PC-9 (cell line): ENCODE measurements at regions of chr17 and their contacts with region 1.

Region 1: DNA sequence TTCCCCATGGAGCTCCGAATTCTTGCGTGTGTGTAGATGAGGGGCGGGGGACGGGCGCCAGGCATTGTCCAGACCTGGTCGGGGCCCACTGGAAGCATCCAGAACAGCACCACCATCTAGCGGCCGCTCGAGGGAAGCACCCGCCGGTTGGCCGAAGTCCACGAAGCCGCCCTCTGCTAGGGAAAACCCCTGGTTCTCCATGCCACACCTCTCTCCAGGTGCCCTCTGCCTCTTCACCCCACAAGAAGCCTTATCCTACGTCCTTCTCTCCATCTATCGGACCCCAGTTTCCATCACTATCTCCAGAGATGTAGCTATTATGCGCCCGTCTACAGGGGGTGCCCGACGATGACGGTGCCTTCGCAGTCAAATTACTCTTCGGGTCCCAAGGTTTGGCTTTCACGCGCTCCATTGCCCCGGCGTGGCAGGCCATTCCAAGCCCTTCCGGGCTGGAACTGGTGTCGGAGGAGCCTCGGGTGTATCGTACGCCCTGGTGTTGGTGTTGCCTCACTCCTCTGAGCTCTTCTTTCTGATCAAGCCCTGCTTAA is 617 bp upstream of the SENP3 start:
- DNase-seq: peak; percentile 62 to 93
- H3K4me3 ChIP-seq: peak overlapping the region; percentile 92
- H3K27ac ChIP-seq: peak overlapping the region; percentile 60
- H3K4me1 ChIP-seq: peaks cover 9% of the 10 kb centered on the region
- H3K27me3 ChIP-seq: no peaks in the 10 kb centered on the region
- CTCF ChIP-seq: peak; percentile 69

Region 2: GRCh38 chr17:7280519-7281429 is 280.3 kb before region 1 on chr17:
- CTCF ChIA-PET with region 1: interaction called, 6 read pairs
- POLR2A ChIA-PET with region 1: no interaction called
- intact Hi-C with region 1: loop called (anchors 1 kb)
- DNase-seq: peak; percentile 74 to 91
- H3K4me3 ChIP-seq: peak overlapping the region; percentile 55
- H3K27ac ChIP-seq: peak overlapping the region; percentile 62
- H3K4me1 ChIP-seq: 0 out of 2 replicates have a peak, but pooled peaks cover 4% of the 10 kb centered on the region
- H3K27me3 ChIP-seq: no peaks in the 10 kb centered on the region
- CTCF ChIP-seq: peak; percentile 96

Region 3: GRCh38 chr17:7394452-7395191 is 166.5 kb before region 1 on chr17 and contains the start of gene PLSCR3:
- CTCF ChIA-PET with region 1: no interaction called
- POLR2A ChIA-PET with region 1: no interaction called
- intact Hi-C with region 1: loop called (anchors 2 kb)
- DNase-seq: peak; percentile 57 to 95
- H3K4me3 ChIP-seq: peak within 1 kb of the TSS; percentile 78
- H3K27ac ChIP-seq: peak within 1 kb of the TSS; percentile 68
- H3K4me1 ChIP-seq: 0 out of 2 replicates have a peak, but pooled peaks cover 5% of the 10 kb centered on the region
- H3K27me3 ChIP-seq: no peaks in the 10 kb centered on the region
- CTCF ChIP-seq: no peak; the same call in 1 of the 2 replicates
- total RNA-seq, gene PLSCR3: 53.0 and 64.5 TPM in 2 replicates

Region 4: DNA sequence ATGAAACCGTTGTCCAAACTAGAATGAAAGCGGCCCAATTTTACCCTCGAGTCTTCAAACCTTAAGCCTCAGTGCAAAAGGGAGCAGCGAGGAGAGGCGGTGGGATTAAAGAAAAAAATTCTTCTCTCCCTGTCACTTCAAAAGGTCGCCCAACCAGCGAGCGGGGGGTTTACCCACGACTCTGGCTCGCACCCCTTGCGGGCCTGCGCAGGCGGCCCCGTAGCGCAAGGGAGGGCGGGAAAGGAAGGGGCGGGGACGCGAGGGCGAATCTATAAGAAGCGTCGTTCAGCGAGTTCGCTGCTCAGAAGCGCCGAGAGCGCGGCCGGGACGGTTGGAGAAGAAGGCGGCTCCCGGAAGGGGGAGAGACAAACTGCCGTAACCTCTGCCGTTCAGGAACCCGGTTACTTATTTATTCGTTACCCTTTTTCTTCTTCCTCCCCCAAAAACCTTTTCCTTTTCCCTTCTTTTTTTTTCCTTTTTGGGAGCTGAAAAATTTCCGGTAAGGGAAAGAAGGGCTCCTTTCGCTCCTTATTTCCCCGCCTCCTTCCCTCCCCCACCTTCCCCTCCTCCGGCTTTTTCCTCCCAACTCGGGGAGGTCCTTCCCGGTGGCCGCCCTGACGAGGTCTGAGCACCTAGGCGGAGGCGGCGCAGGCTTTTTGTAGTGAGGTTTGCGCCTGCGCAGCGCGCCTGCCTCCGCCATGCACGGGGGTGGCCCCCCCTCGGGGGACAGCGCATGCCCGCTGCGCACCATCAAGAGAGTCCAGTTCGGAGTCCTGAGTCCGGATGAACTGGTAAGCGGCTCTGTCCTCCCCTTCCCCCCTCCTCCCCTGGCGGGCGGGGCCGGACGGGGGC is 76.8 kb before region 1 on chr17 and contains the start of gene POLR2A:
- CTCF ChIA-PET with region 1: interaction called, 10 read pairs
- POLR2A ChIA-PET with region 1: no interaction called
- intact Hi-C with region 1: loop called (anchors 2 kb)
- DNase-seq: peak; percentile 79 to 99
- H3K4me3 ChIP-seq: peak within 1 kb of the TSS; percentile 88
- H3K27ac ChIP-seq: peak within 1 kb of the TSS; percentile 95
- H3K4me1 ChIP-seq: peaks cover 18% of the 10 kb centered on the region
- H3K27me3 ChIP-seq: no peaks in the 10 kb centered on the region
- CTCF ChIP-seq: no peak
- total RNA-seq, gene POLR2A: 149 and 166 TPM in 2 replicates

Region 5: GRCh38 chr17:7515911-7516610 is 45.0 kb before region 1 on chr17:
- CTCF ChIA-PET with region 1: interaction called, 22 read pairs
- POLR2A ChIA-PET with region 1: no interaction called
- intact Hi-C with region 1: loop called (anchors 1 kb)
- DNase-seq: no peak
- H3K4me3 ChIP-seq: no peak overlapping the region
- H3K27ac ChIP-seq: no peak overlapping the region
- H3K4me1 ChIP-seq: no peaks in the 10 kb centered on the region
- H3K27me3 ChIP-seq: no peaks in the 10 kb centered on the region
- CTCF ChIP-seq: no peak